Endothelial cell of umbilical vein (primary cell): ENCODE measurements at regions of chr11 and their contacts with region 1.

Region 1: DNA sequence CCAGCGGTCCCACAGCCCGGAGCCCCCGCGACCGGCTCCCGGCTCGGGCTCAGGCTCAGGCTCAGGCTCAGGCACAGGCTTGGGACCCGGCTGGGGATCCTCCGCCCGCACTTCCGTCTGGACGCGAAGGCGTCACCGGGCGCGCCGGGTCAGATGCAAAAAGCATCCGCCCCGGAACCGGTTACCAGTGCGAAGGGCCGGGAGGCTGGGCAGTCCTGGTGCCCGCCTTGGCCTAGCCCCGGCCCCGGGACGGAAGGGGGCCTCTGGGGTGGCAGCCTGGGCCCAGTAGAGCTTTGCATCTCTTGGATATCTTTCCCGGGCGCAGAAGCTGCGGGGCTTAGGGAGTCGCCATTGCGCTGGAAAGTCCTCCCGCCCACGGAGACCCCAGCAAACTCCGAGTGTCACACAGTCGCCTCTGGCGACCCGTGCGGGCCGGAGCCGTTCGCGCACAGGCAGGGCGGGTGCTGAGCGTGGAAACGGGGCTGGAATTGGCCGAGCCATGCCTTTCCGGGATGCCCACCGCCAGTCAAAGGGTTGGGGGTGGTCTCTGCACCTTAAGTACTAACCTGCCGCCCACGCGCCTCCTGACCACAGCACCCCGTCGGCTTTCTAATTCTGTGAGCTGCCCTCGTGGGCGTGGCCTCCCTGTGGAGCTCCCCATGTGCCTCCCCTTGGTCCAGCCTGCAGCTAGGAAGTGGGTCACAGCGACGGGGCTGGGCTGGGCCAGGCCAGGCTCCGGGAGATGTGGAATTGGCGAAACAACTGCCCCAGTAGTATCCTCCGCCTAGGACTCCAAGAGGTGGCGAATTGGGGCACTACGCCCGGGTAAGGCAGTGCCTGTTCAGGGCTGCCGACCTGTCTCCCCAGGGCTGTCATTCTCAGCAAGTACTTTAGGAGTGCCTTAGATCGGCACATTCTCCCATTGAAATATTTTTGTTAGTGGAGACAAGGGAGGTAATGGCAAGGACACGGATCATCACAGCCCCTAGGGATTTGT is at the start of gene TMEM9B:
- DNase-seq: peak; percentile 83
- H3K4me3 ChIP-seq: peak within 1 kb of the TSS; percentile 71 to 91 (median 81)
- H3K27ac ChIP-seq: peak within 1 kb of the TSS; percentile 88
- H3K4me1 ChIP-seq: peaks cover 15% of the 10 kb centered on the region
- H3K27me3 ChIP-seq: no peaks in the 10 kb centered on the region
- CTCF ChIP-seq: no peak
- POLR2A ChIP-seq: peak; percentile 96
- total RNA-seq, gene TMEM9B: 27.1 and 30.2 TPM in 2 replicates

Region 2: GRCh38 chr11:8338138-8338537 is 626.5 kb before region 1 on chr11:
- CTCF ChIA-PET with region 1: interaction called, 4 read pairs
- POLR2A ChIA-PET with region 1: no interaction called
- dilution Hi-C with region 1: no loop called
- intact Hi-C with region 1: loop called (anchors 1 kb)
- DNase-seq: peak; percentile 29
- H3K4me3 ChIP-seq: no peak overlapping the region
- H3K27ac ChIP-seq: no peak overlapping the region
- H3K4me1 ChIP-seq: no peaks in the 10 kb centered on the region
- H3K27me3 ChIP-seq: no peaks in the 10 kb centered on the region
- CTCF ChIP-seq: peak; percentile 69 to 85
- POLR2A ChIP-seq: no peak

Region 3: GRCh38 chr11:8682303-8683114 is 282.1 kb before region 1 on chr11 and contains the starts of genes RPL27A and TRIM66:
- CTCF ChIA-PET with region 1: interaction called, 7 read pairs
- POLR2A ChIA-PET with region 1: no interaction called
- dilution Hi-C with region 1: no loop called
- intact Hi-C with region 1: loop called (anchors 2 kb)
- DNase-seq: peak; percentile 97
- H3K4me3 ChIP-seq: peak within 1 kb of the TSS; percentile 58 to 92 (median 88)
- H3K27ac ChIP-seq: peak within 1 kb of the TSS; percentile 86
- H3K4me1 ChIP-seq: peaks cover 30% of the 10 kb centered on the region
- H3K27me3 ChIP-seq: no peaks in the 10 kb centered on the region
- CTCF ChIP-seq: peak in 1 of 2 donors; percentile 7
- POLR2A ChIP-seq: peak; percentile 100
- total RNA-seq, gene RPL27A: 952 and 1,303 TPM in 2 replicates
- total RNA-seq, gene TRIM66: 8.6 and 11.7 TPM in 2 replicates

Region 4: DNA sequence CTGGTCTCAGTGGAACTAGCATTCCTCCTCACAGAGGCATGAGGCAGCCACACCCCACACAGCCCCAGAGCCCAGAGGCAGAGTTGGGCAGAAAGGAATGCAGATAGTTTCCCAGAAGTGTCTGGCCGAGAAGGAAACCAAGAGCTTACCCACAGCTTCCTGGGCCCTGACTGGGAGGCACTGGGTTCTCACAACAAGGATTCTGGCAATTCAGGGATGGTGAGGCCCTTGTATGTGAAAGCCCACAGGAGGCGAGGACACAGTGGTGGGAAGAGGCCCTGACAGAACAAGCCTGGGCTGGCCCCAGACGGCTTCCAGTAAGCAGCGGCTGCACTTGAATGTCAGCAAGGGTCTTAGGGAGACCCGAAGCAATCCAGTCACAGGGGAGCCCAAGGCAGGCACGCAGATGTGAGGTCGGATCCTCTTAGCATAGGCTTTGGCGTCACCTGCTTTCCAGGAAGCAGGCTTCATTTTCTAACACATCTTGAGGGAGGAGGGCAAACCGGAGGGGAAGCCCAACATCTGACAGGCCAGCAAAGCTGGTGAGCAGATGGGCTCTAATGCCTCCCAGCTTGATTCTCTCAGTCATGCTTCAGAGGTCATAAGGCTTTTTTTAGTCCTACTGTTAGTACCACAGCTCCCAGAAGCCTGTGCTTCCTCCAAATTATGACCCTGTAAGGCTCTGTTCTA is 131.9 kb before region 1 on chr11:
- CTCF ChIA-PET with region 1: interaction called, 8 read pairs
- POLR2A ChIA-PET with region 1: no interaction called
- dilution Hi-C with region 1: no loop called
- intact Hi-C with region 1: loop called (anchors 5 kb)
- DNase-seq: no peak
- H3K4me3 ChIP-seq: no peak overlapping the region
- H3K27ac ChIP-seq: no peak overlapping the region
- H3K4me1 ChIP-seq: peaks cover 5% of the 10 kb centered on the region
- H3K27me3 ChIP-seq: no peaks in the 10 kb centered on the region
- CTCF ChIP-seq: no peak
- POLR2A ChIP-seq: no peak

Region 5: GRCh38 chr11:8932183-8933180 is 32.1 kb before region 1 on chr11 and contains the start of gene C11orf16:
- CTCF ChIA-PET with region 1: interaction called, 21 read pairs
- POLR2A ChIA-PET with region 1: no interaction called
- dilution Hi-C with region 1: no loop called
- intact Hi-C with region 1: no loop called
- DNase-seq: no peak
- H3K4me3 ChIP-seq: no peak within 1 kb of the TSS
- H3K27ac ChIP-seq: no peak within 1 kb of the TSS
- H3K4me1 ChIP-seq: peaks cover 7% of the 10 kb centered on the region
- H3K27me3 ChIP-seq: no peaks in the 10 kb centered on the region
- CTCF ChIP-seq: no peak
- POLR2A ChIP-seq: no peak
- total RNA-seq, gene C11orf16: not detected in 2 replicates

Region 6: DNA sequence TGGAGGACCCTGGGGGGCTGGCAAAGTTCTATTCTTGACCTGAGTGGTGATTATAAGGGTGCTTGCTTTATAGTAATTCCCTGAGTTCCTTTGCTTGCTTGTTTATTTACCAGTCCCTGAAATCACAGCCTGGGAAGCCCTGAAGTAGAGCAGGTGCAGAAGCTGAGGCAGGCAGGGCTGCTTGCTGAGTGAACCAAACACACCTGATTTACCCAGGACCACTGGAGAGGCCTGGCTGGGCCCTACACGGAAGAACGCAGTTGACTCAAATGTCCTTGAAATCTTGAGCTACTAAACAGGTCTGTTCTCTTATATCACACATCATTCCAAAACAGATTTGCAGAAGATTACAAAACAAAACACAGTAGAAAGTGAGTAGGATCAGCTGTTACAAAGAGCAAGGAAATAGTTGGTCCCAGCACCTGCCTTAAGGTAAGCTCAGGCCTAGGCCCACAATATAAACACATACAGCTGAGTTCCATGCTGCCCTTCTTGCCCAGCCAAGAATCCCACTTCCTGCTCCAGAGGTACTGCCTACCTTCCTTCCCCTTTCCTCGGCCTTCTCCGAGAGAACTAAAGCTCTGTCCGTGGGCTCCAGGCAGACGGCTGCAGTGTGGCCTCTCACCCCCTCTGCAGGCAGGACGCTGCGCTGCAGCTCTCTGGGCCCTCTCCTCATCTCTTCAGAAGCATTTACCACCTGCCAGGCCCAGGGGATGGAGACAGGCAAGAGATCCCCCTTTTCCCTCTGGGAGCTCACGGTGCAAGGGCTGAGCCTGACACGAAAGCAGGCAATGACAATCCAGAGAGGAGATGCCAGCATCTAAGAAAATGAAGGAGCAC is 172.9 kb after region 1 on chr11:
- CTCF ChIA-PET with region 1: interaction called, 33 read pairs
- POLR2A ChIA-PET with region 1: no interaction called
- dilution Hi-C with region 1: no loop called
- intact Hi-C with region 1: loop called (anchors 1 kb)
- DNase-seq: peak; percentile 85
- H3K4me3 ChIP-seq: no peak overlapping the region
- H3K27ac ChIP-seq: peak overlapping the region; percentile 75
- H3K4me1 ChIP-seq: peaks cover 37% of the 10 kb centered on the region
- H3K27me3 ChIP-seq: no peaks in the 10 kb centered on the region
- CTCF ChIP-seq: peak; percentile 90 to 99
- POLR2A ChIP-seq: no peak